Activated CD4-positive, alpha-beta T cell treated with anti-CD3 and anti-CD28 coated beads for 36 hours (primary cell): ENCODE measurements at regions of chr17 and their contacts with region 1.

Region 1: GRCh38 chr17:12395733-12396354 is 269.8 kb upstream of the MYOCD start:
- DNase-seq: peak; percentile 23
- ATAC-seq: no peak
- H3K4me3 Mint-ChIP-seq: no peak overlapping the region
- H3K27ac Mint-ChIP-seq: no peak overlapping the region
- H3K4me1 Mint-ChIP-seq: no peaks in the 10 kb centered on the region
- H3K27me3 Mint-ChIP-seq: no peaks in the 10 kb centered on the region

Region 2: GRCh38 chr17:12568358-12569251 is 172.8 kb after region 1 on chr17:
- CTCF ChIA-PET with region 1: interaction called, 3 read pairs
- POLR2A ChIA-PET with region 1: no interaction called
- intact Hi-C with region 1: loop called in 1 of 2 experiments (anchors 10 kb)
- DNase-seq: no peak
- ATAC-seq: no peak
- H3K4me3 Mint-ChIP-seq: no peak overlapping the region
- H3K27ac Mint-ChIP-seq: no peak overlapping the region
- H3K4me1 Mint-ChIP-seq: no peaks in the 10 kb centered on the region
- H3K27me3 Mint-ChIP-seq: no peaks in the 10 kb centered on the region